Posterior cingulate gyrus (tissue), 11 donors: ENCODE measurements at regions of chr11 and their contacts with region 1.

Region 1: DNA sequence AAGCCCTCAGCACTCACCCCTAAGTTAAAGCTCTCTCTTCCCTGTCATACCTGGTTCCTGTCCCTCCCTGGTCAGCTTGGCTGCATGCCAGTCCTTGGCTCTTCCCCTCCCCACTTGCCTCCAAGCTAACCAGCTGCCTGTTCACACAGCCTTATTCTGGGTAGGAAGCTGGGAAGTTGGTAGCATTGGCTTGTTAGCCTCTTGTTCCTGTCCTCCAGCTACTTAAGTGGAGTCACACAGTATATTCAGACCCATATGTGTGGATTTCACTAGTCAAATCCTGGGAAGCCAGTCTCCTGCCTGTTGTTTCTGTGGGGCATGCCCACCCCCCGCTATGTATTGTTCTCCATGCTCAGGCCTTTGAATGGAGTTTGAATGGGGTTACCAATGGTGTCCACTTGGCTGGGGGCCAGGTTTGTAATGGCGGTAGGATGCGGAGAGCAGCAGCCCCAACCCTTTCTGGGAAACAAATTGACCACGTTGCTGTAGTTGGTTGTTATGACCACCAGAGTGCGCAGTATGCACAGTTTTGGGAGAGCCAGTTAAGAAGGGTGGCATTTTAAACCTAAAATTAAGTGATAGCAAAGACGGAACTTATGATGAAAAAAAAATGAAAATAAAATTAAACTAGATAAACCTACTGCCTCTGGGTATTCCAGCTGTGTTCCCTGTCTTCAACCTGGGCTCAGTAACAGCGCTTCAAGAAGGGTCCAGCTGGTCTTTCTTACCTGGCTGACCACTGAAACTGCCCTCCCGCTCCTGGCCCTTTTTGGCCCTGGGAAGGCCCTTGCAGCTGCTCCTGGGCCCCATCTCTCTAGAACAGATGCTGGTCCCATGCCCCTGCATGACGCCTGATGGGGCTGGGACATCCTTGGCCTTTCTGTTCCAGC is 10.7 kb upstream of the RPS3 start:
- DNase-seq: peak in 8 of 10 donors; percentile 19 to 93 (median 67)

Region 2: DNA sequence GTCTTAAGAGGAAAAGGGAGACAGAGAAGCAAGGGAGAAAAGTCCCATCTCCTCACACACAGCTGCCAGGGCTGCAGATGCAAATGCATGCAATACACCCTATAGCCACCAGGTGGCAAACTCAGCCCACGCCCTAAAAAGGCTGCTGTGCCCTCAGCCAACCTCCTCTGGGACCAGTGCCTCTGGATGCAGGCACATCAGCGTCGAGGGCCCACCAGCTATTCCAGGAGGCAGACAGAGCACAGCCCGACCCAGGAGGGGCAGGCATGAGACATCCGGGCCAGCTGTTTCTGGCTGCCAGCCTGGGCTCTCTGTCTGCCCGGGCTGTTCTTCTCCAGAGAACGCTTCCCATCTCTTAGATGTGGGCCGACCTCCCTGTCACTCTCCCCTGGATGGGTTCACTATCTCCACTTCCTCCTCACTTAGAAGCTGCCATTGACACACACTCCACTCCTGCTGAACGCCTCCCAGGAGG is 108.4 kb before region 1 on chr11:
- intact Hi-C with region 1: loop called (anchors 1 kb)
- DNase-seq: peak; percentile 68 to 97 (median 86)

Region 3: GRCh38 chr11:75328426-75329277 is 60.0 kb before region 1 on chr11:
- intact Hi-C with region 1: loop called (anchors 1 kb)
- DNase-seq: peak in 9 of 10 donors; percentile 62 to 96 (median 76)

Region 4: DNA sequence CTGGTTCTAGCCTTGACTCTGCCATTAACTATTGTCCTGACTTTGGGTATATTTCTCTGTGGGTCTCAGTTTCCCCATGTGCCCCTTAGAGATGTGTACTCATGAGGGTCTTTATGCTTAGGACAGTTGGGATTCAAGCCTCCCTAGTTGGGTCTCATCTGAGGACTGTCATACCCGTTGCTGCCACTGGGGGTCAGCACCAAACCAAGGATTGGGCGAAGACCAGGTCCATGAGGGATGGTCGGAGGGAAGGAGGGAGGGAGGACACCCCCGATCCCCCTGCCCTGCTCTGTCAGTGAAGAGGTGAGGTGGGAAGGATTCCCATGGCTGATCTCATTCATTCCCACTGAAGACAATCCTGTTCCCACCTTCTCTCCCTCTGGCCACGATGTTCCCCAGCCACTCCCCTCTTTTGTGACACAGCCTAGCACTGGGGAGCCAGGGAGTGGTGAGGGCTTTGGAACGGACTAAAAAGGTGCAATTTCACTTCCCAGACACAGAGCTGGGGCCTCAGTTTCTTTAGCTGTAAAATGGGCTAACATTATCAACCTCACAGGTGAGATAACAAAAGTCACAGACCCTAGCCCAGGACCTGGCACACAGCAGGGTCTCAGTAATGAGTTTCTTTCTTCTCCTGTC is 56.8 kb after region 1 on chr11:
- intact Hi-C with region 1: loop called (anchors 10 kb)
- DNase-seq: peak; percentile 55 to 95 (median 81)

Region 5: DNA sequence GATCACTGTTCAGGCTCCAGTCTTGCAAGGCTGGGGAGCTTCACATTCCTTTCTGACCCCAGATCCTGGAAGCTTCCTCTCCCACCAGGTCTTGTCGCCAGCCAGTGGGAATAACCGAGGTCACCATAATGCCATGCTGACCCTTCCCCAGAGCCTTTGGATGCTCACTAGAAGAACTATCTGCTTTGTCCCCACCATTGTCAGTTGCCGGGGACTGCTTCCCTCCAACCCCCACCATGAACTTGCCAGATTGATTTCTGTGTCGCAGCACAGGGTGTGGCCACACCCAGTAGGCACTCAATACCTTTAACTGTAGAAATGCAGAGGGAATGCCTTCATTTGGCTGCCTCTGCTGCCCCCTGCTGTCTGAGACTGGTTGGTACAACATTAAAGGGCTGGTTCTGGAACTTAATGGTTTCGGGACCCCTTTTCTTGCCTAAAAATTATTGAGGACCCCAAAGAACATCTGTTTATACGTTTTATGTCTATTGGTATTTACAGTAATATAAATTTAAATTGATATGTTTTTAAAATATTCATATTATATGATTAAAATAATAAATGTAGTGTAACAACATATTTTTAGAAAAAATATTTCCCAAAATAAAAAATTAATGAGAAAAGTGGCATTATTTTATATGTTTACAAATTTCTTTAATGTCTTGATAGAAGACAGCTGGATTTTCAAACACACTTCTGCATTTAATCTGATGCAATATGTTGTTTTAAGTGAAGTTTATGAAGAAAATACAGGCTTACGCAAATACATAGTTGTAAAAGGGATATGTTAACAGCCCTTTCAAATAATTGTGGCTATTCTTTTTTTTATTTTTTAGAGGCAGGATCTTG is 143.8 kb after region 1 on chr11:
- intact Hi-C with region 1: loop called (anchors 2 kb)
- DNase-seq: peak in 9 of 10 donors; percentile 47 to 95 (median 76)